Esophagus muscularis mucosa (tissue), 4 donors: ENCODE measurements at regions of chr5 and their contacts with region 1.

Region 1: GRCh38 chr5:121968910-121969607 is 7.3 kb downstream of the SRFBP1 start:
- DNase-seq: no peak
- H3K4me3 ChIP-seq: no peak overlapping the region
- H3K27ac ChIP-seq: peak overlapping the region in 3 of 4 donors; percentile 29 to 39 (median 37)
- H3K4me1 ChIP-seq: peaks cover 11 to 28% (median 24%) of the 10 kb centered on the region in 4 donors
- H3K27me3 ChIP-seq: no peaks in the 10 kb centered on the region
- CTCF ChIP-seq: no peak
- EP300 ChIP-seq: no peak
- POLR2A ChIP-seq: no peak

Region 2: GRCh38 chr5:122101636-122102285 is 132.7 kb after region 1 on chr5:
- intact Hi-C with region 1: loop called (anchors 2 kb)
- DNase-seq: no peak
- H3K4me3 ChIP-seq: no peak overlapping the region
- H3K27ac ChIP-seq: no peak overlapping the region
- H3K4me1 ChIP-seq: no peaks in the 10 kb centered on the region
- H3K27me3 ChIP-seq: no peaks in the 10 kb centered on the region
- CTCF ChIP-seq: peak; percentile 38 to 65 (median 54)
- EP300 ChIP-seq: no peak
- POLR2A ChIP-seq: no peak

Region 3: GRCh38 chr5:122156724-122157325 is 187.8 kb after region 1 on chr5:
- intact Hi-C with region 1: loop called (anchors 10 kb)
- DNase-seq: no peak
- H3K4me3 ChIP-seq: no peak overlapping the region
- H3K27ac ChIP-seq: no peak overlapping the region
- H3K4me1 ChIP-seq: peaks cover 3 to 40% (median 32%) of the 10 kb centered on the region in 4 donors
- H3K27me3 ChIP-seq: no peaks in the 10 kb centered on the region
- CTCF ChIP-seq: peak; percentile 48 to 52 (median 52)
- EP300 ChIP-seq: no peak
- POLR2A ChIP-seq: no peak

Region 4: GRCh38 chr5:122182491-122182921 is 213.4 kb after region 1 on chr5:
- intact Hi-C with region 1: loop called (anchors 10 kb)
- DNase-seq: no peak
- H3K4me3 ChIP-seq: no peak overlapping the region
- H3K27ac ChIP-seq: peak overlapping the region; percentile 39 to 82 (median 64)
- H3K4me1 ChIP-seq: peaks cover 28 to 39% (median 36%) of the 10 kb centered on the region in 4 donors
- H3K27me3 ChIP-seq: no peaks in the 10 kb centered on the region
- CTCF ChIP-seq: no peak
- EP300 ChIP-seq: no peak
- POLR2A ChIP-seq: no peak

Region 5: DNA sequence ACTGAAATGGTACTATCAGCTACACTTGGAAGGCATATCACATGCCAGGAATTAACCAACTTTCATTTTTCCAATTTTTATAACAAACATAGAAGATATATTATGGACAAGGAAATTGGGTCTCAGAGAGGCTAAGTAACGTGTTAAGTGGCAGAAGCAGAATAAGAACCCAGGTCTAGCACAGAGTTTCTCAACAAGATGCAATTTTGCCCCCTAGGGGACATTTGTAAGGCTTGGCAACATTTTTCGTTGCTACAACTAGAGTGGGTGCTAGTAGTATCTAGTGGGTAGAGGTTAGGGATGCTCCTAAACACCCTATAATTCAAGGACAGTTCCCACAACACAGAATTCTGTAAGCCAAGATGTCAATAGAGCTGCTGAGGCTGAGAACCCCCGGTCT is 523.6 kb after region 1 on chr5:
- intact Hi-C with region 1: no loop called
- DNase-seq: no peak
- H3K4me3 ChIP-seq: no peak overlapping the region
- H3K27ac ChIP-seq: no peak overlapping the region
- H3K4me1 ChIP-seq: peaks cover 0 to 4% (median 0%) of the 10 kb centered on the region in 4 donors
- H3K27me3 ChIP-seq: no peaks in the 10 kb centered on the region
- CTCF ChIP-seq: no peak
- EP300 ChIP-seq: no peak
- POLR2A ChIP-seq: no peak